Activated T-helper 2 cell treated with anti-CD3 and anti-CD28 coated beads, Interferon-gamma antibody, Interleukin-2, Interleukin-4, amounts not matched to agents 10 μg/mL and 5 μg/mL and 100 μg/mL, durations not matched to agents 14 hours and 24 hours and 36 hours (primary cell): ENCODE measurements at regions of chr22 and their contacts with region 1.

Region 1: DNA sequence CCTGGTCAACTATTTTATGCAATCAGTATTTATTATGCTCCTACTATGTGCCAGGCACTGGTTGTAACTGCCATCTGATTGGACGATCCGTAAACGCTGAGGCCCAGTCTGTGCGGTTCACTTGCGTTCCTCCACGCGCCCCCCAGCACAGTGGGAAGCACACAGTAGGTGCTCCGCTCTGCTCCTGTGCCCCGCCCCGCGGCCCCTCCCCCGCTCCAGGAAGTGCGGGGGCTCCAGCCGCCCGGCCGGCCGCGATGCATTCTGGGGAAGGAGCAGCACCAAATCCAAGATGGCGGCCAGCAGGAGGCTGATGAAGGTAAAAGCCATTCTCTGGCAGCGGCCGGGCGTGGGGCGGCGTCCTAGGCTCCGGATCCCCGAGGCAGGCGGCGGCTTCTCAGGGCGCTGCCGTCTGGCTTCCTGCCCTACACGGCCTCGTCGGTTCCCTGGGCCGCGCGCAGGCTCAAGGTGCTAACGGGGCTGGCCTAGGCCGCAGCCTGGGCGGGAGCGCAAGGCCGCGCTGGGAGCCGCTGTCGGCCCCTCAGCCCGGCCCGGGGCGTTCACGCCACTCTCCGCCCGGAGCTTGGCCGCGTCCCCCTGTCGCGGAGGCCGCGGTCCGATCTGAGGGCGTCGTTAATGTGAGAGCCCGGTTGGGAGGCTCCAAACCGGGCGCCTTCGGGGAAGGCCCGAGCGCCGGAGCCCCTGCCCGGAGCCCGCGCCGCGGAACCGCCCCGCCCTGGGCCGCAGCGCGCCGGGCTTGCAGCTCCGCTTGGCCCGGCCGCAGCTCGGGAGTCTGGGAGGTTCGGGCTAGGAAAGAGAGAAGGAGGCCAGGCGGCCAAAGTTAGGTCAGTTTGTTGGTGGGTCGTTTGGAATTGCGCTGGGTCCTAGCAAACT is at the start of gene UBE2L3:
- DNase-seq: peak; percentile 81
- H3K4me3 Mint-ChIP-seq: peak within 1 kb of the TSS; percentile 96
- H3K27ac Mint-ChIP-seq: peak within 1 kb of the TSS; percentile 90
- H3K4me1 Mint-ChIP-seq: peaks cover 34% of the 10 kb centered on the region
- H3K27me3 Mint-ChIP-seq: no peaks in the 10 kb centered on the region
- total RNA-seq, gene UBE2L3: 63.5 and 65.5 TPM in 2 replicates

Region 2: GRCh38 chr22:21587803-21588611 is 20.3 kb after region 1 on chr22:
- intact Hi-C with region 1: loop called (anchors 1 kb)
- DNase-seq: no peak
- H3K4me3 Mint-ChIP-seq: no peak overlapping the region
- H3K27ac Mint-ChIP-seq: peak overlapping the region; percentile 75
- H3K4me1 Mint-ChIP-seq: peaks cover 18% of the 10 kb centered on the region
- H3K27me3 Mint-ChIP-seq: no peaks in the 10 kb centered on the region

Region 3: DNA sequence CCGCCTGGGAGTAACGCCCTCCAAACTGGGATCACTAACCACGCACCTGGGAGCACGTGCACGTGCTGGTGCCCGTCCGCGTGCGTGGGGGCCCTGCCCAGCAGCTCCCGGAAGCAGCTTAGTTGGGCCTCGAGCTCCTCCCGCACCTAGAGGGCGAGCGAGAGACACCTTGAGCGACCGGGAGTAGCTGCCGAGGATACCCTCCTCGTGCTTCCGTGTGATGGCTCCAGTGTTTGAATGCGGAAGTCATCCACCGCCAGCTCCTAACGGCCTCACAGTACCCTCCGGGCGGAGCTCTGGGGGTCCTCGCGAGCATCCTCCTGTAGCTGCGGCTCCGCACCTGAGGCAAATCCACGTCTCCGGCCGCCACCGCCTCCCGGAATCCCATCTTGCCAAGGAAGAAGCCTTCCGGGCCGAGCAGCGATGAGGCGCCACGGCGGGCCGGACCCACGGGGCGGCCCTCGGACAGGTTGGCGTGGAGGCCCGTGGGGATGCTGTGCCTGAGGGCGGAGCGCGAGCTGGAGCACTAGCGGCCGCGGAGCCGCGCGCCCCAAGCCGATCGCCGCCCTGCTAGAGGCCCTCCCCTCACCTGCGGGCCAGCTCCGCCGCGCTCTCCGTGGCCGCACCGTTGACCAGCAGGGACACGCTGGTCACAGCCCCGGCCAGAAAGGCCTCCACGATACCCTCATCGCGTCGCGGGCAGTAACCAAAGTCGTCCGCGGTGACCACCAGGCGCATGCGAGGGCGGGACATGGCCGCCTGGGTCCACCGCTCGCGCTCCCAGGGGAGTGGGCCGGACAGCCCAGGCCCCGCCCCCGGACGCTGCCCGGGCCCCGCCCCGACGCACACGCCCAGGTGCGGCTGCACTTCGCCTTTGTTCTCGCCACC is 61.8 kb after region 1 on chr22 and contains the start of gene YDJC:
- intact Hi-C with region 1: loop called (anchors 1 kb)
- DNase-seq: peak; percentile 91
- H3K4me3 Mint-ChIP-seq: peak within 1 kb of the TSS; percentile 89
- H3K27ac Mint-ChIP-seq: peak within 1 kb of the TSS; percentile 90
- H3K4me1 Mint-ChIP-seq: peaks cover 36% of the 10 kb centered on the region
- H3K27me3 Mint-ChIP-seq: no peaks in the 10 kb centered on the region
- total RNA-seq, gene YDJC: 44.3 and 49.6 TPM in 2 replicates

Region 4: GRCh38 chr22:21652010-21652546 is 84.4 kb after region 1 on chr22:
- intact Hi-C with region 1: no loop called
- DNase-seq: peak; percentile 88
- H3K4me3 Mint-ChIP-seq: peak overlapping the region; percentile 91
- H3K27ac Mint-ChIP-seq: peak overlapping the region; percentile 89
- H3K4me1 Mint-ChIP-seq: peaks cover 23% of the 10 kb centered on the region
- H3K27me3 Mint-ChIP-seq: no peaks in the 10 kb centered on the region

Region 5: DNA sequence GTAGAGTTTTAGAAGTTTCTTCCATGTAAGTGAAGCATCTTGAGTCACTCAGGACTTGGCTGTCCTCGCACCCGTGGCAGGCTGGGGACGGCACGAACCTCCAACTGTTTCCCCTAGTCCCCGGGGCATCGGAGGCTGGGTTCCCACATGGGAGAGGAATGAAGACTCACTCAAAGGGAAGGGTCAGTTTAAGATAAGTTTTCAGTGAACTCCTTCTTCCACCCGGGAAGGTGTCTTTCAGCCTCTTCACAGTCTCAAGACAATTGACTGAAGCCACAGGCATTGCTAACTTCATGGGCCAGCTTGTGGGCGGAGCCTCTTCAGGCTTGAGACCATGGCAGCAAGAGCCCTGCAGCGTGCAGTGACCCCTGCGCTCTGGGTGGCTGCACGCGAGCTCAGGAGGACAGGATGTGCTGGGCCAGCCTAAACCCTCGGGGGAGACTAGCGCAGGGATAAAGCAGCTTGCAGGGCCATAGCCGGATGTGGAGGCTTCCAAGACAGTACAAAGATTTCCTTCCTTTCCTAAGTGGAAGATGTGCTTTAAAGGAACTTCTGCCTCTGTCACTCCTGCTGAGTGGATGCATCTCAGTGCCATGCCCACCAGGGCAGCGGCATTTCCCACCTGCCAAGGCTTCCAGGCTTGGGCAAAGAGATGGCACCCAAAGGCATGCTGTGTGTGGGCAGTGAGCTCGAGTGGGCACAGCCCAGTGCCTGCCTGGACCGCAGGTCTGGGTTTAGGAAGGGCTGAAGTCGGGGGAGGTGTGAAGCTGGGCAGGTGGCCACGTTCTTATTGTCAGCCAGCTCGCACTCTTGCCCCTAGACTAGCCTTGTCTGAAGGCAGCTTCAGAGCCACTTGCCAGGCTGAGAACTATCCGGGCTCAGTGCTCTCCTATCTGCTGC is 131.0 kb after region 1 on chr22:
- intact Hi-C with region 1: no loop called
- DNase-seq: no peak
- H3K4me3 Mint-ChIP-seq: no peak overlapping the region
- H3K27ac Mint-ChIP-seq: no peak overlapping the region
- H3K4me1 Mint-ChIP-seq: no peaks in the 10 kb centered on the region
- H3K27me3 Mint-ChIP-seq: no peaks in the 10 kb centered on the region